ENCODE measurements at regions of chr3 and their contacts with region 1.

Region 1: DNA sequence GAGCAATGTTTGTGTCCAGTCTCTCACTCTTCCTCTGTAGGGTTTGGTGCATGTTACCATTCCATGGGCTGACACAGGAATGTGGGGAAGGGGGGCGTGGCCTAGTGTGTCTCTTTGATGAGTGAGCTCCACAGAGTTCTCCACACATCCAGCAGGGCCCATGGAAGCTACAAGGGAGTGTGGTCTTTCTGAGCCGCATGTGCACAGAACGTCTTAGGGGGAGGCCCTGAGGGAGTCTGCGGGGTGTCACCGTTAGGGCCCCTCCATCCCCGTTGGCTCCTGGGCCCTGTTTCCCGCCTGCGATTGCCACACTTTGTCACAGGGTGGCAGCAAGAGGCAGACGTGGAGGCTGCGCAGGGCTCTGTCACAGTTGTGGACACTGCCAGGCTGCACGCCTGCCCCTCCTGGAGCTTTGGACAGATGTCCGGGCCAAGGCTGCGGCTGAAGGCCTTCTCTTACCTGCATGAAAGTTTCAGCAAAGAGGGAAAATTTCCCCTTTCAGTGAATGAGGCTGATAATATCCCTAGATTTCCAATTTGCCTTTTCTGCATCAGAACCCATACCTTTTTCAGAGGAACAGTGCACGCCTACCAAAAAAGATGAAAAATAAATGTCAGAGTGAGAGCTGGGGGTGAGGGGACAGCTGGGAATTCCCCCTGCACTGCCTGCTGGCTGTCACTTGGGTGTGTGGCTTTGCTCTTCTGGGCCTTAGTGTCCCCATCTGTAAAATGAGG is 24.3 kb downstream of the CACNA2D3 start:
- DNase-seq: peak in 8 of 10 donors; percentile 47 to 81 (median 68)
- H3K4me3 ChIP-seq: peak overlapping the region in 3 of 59 donors; percentile 9 to 24 (median 16)
- H3K27ac ChIP-seq: no peak overlapping the region
- H3K27me3 ChIP-seq: peaks cover 0 to 2% (median 0%) of the 10 kb centered on the region in 45 donors
- CTCF ChIP-seq: peak; percentile 29 to 79 (median 65)

Region 2: DNA sequence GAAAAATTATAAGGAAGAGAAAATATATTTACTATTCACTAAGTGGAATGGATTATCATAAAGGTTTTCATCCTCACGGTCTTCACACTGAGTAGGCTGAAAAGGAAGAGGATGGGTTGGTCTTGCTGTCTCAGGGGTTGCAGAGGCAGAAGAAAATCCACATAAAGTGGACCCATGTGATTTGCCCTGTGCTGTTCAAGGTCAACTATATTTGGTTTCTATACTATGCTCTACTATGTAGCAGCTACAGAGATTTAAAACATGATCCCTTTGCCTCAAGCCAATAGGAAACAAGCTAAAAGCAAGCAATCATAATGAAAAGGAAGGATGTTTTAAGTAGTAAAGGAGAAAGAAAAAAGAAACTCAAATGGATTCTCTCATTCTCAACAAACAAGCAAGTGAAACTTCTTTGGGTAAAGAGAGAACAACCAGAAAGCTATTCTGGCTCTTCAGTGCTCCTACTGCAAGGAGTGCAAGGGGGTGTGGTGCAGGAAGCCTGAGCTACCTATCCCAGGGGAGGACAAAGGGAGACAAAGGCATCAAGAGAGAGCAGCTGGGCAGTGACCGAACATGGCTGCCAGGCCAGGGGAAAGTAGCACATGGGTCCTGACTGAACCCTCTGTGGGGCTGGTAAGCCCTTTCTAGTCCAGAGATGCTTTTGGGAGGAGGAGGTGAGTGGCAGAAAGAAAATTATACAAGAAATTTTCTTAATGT is 1136.7 kb before region 1 on chr3:
- intact Hi-C with region 1: no loop called
- DNase-seq: no peak
- H3K4me3 ChIP-seq: no peak overlapping the region
- H3K27ac ChIP-seq: no peak overlapping the region
- H3K27me3 ChIP-seq: no peaks in the 10 kb centered on the region
- CTCF ChIP-seq: no peak

Region 3: DNA sequence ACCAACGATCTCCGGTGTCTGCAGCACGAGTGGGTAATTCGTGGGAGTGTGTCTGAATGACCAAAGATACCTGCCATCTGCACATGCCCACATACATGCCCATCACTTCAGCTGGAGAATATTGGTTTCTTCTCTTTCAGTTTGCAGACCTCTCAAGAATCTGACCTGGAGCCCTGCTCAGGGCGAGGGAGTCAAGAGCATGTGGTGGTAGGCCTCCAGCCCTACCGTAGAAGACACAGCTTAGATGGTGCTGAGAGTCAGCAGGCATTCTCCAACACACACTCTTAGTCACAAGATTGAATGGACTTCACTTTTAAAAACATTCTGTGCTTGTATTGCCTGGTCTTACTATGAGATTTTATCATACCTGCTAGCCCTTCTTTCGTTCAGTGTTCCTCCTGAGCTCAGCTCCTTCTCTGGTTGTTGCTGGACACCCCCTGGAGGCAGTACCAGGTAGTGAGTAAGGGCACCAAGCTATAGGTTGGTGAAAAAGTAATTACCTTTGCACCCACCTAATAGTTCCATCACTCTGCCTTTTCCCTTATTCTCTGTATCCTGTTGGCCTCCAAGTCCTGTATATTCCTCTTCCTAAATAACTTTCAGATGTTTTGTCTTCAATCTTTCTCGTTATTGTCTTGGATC is 227.7 kb after region 1 on chr3:
- intact Hi-C with region 1: loop called in 1 of 2 experiments (anchors 10 kb)
- DNase-seq: no peak
- H3K4me3 ChIP-seq: no peak overlapping the region
- H3K27ac ChIP-seq: no peak overlapping the region
- H3K27me3 ChIP-seq: peaks cover 0 to 3% (median 0%) of the 10 kb centered on the region in 45 donors
- CTCF ChIP-seq: peak in 47 of 56 donors; percentile 14 to 59 (median 35)

Region 4: GRCh38 chr3:54408328-54408727 is 261.7 kb after region 1 on chr3:
- intact Hi-C with region 1: no loop called
- DNase-seq: no peak
- H3K4me3 ChIP-seq: no peak overlapping the region
- H3K27ac ChIP-seq: no peak overlapping the region
- H3K27me3 ChIP-seq: no peaks in the 10 kb centered on the region
- CTCF ChIP-seq: no peak

Measured in dorsolateral prefrontal cortex (tissue), 120 donors.